Gastrocnemius medialis (tissue), 4 donors: ENCODE measurements at regions of chr2 and their contacts with region 1.

Region 1: GRCh38 chr2:139631966-139632365 is 851.8 kb upstream of the NXPH2 start:
- DNase-seq: no peak
- ATAC-seq: no peak
- H3K4me3 ChIP-seq: no peak overlapping the region
- H3K27ac ChIP-seq: no peak overlapping the region
- H3K4me1 ChIP-seq: no peaks in the 10 kb centered on the region
- H3K27me3 ChIP-seq: no peaks in the 10 kb centered on the region
- CTCF ChIP-seq: no peak
- POLR2A ChIP-seq: no peak

Region 2: GRCh38 chr2:139613264-139613663 is 18.7 kb before region 1 on chr2:
- in situ Hi-C with region 1: no loop called
- intact Hi-C with region 1: loop called (anchors 2 kb)
- DNase-seq: no peak
- ATAC-seq: no peak
- H3K4me3 ChIP-seq: no peak overlapping the region
- H3K27ac ChIP-seq: no peak overlapping the region
- H3K4me1 ChIP-seq: no peaks in the 10 kb centered on the region
- H3K27me3 ChIP-seq: no peaks in the 10 kb centered on the region
- CTCF ChIP-seq: no peak
- POLR2A ChIP-seq: no peak